ENCODE measurements at regions of chr10 and their contacts with region 1.

Region 1: GRCh38 chr10:100046021-100046486 is 35.6 kb downstream of the CPN1 start:
- DNase-seq: peak; percentile 68
- H3K4me3 ChIP-seq: no peak overlapping the region
- H3K27ac ChIP-seq: no peak overlapping the region
- H3K27me3 ChIP-seq: no peaks in the 10 kb centered on the region
- CTCF ChIP-seq: peak; percentile 97

Region 2: DNA sequence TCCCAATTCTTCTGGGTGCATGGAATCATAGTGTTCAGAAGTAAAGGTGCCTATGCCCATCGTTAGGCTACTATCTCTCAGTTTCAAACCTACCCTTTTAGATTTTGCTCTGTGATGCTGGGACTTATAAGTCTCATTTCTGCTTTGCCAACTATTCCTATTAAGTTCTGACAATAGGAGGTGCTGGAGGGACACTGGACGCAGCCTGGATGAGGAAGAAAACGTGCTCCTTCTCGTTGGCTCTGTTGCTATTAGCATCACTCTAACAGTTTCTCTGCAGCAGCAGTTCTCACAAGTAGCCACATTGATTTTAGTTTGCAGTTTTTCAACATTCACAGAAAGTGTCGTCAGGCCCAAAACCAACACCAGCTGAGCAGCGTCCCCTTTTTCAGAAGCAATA is 191.2 kb before region 1 on chr10:
- CTCF ChIA-PET with region 1: interaction called, 325 read pairs
- POLR2A ChIA-PET with region 1: no interaction called
- DNase-seq: peak; percentile 61
- H3K4me3 ChIP-seq: no peak overlapping the region
- H3K27ac ChIP-seq: no peak overlapping the region
- H3K27me3 ChIP-seq: no peaks in the 10 kb centered on the region
- CTCF ChIP-seq: peak; percentile 76

Region 3: DNA sequence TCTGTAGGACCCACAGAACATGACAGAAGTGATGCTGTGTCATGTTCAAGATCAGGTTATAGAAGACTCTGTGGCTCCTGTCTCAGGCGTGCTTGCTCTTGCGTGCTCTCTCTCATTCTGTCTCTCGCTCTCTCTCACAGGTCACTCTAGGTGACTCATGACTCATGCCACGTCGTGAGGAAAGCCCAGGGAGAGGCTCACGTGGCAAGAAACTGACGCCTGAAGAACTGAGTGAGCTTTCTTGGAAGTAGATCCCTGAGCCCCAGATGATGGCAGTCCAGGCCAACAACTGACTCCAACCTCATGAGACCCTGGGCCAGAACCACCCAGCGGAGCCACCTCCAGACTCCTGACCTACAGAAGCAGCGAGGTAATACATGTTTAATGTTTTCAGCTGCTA is 139.6 kb before region 1 on chr10:
- CTCF ChIA-PET with region 1: interaction called, 37 read pairs
- POLR2A ChIA-PET with region 1: no interaction called
- DNase-seq: peak; percentile 93
- H3K4me3 ChIP-seq: no peak overlapping the region; the same call in 1 of the 2 replicates
- H3K27ac ChIP-seq: peak overlapping the region; percentile 95
- H3K27me3 ChIP-seq: no peaks in the 10 kb centered on the region
- CTCF ChIP-seq: peak; percentile 42

Region 4: GRCh38 chr10:99976886-99977665 is 69.0 kb before region 1 on chr10:
- CTCF ChIA-PET with region 1: interaction called, 15 read pairs
- POLR2A ChIA-PET with region 1: no interaction called
- DNase-seq: peak; percentile 78
- H3K4me3 ChIP-seq: peak overlapping the region; percentile 14; the same call in 1 of the 2 replicates
- H3K27ac ChIP-seq: peak overlapping the region; percentile 79
- H3K27me3 ChIP-seq: no peaks in the 10 kb centered on the region
- CTCF ChIP-seq: no peak

Region 5: GRCh38 chr10:99993701-99994689 is 52.1 kb before region 1 on chr10:
- CTCF ChIA-PET with region 1: interaction called, 15 read pairs
- POLR2A ChIA-PET with region 1: no interaction called
- DNase-seq: no peak
- H3K4me3 ChIP-seq: no peak overlapping the region
- H3K27ac ChIP-seq: peak overlapping the region; percentile 13
- H3K27me3 ChIP-seq: no peaks in the 10 kb centered on the region
- CTCF ChIP-seq: no peak

Region 6: DNA sequence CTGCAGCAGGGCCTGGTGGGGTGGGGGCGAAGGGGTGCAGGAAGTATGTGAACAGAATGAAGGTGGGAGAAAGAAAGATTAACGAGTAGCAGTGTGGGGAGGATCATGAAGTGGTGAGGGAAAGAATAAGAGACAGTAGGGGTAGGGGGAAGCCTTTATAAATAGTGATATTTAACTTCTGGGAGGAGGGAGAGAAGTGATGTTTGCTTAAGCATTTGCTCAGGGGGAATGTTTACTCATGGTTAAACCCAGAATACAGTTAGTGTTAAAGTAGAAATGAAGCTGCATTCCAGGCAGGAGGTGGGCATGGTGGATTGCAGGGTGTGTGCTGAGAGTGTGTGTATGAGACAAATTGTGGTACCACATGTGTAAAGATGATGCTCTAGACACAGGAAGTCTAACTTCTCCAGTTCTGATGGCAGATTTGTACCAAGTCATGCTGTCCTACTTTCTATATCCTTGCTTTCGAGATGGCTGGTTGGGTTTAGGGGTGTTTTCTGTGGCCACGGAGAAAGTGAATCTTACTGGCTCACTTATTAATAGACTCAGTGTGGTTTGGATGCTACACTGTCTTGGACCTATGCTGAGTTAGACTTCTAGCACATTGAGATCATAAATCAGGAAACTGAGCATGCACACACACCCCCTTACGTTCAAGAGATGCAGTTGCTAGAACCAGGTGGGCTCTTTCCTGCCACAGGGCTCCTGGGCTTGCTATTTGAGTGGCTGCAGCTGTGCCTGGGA is 25.7 kb before region 1 on chr10:
- CTCF ChIA-PET with region 1: interaction called, 41 read pairs
- POLR2A ChIA-PET with region 1: interaction called, 3 read pairs
- DNase-seq: no peak
- H3K4me3 ChIP-seq: no peak overlapping the region
- H3K27ac ChIP-seq: no peak overlapping the region
- H3K27me3 ChIP-seq: peaks cover 4% of the 10 kb centered on the region
- CTCF ChIP-seq: no peak